CD4-positive, alpha-beta memory T cell (primary cell): ENCODE measurements at regions of chr5 and their contacts with region 1.

Region 1: GRCh38 chr5:154405078-154405792 is 40.6 kb upstream of the SAP30L start:
- DNase-seq: peak; percentile 56 to 61 (median 59)
- H3K4me3 ChIP-seq: peak overlapping the region in 1 of 2 donors; percentile 14
- H3K4me3 Mint-ChIP-seq: peak overlapping the region in 7 of 8 donors; percentile 27 to 80 (median 43)
- H3K27ac ChIP-seq: no peak overlapping the region
- H3K27ac Mint-ChIP-seq: peak overlapping the region in 3 of 7 donors; percentile 13 to 43 (median 30)
- H3K4me1 ChIP-seq: peaks cover 4% of the 10 kb centered on the region
- H3K4me1 Mint-ChIP-seq: peaks cover 2 to 16% (median 11%) of the 10 kb centered on the region in 4 donors
- H3K27me3 ChIP-seq: no peaks in the 10 kb centered on the region
- H3K27me3 Mint-ChIP-seq: no peaks in the 10 kb centered on the region

Region 2: DNA sequence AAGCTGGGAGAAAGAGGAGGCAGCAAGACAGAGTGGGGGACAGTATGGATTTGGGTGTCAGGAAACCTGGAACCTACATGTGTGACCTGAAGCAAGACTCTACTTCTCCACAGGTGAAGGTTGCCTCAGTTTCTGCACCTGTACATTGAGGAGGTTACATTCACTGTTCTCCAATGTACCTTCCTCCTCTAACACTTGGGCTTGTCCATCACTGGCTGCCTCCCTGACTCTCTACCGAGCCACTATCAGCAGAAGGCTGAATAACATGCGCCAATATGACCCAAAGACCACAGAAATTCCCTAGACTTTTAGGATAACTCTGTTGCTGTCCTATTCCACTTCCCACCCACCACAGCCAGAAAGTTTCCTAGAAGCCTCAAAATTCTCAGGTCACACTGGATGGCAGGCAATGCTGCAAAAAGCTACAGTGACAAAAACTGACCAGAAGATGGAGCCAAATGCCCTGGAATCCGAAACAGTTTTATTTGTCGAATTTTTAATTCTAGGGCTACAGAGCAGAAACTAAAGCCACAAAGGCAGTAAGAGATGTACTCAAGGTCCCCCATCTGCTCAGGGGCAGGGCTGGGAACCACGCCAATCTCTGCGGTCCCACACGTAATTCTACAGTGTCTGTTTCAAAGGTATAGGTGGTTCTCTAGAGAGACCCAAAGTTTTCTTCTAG is 431.0 kb before region 1 on chr5:
- CTCF ChIA-PET with region 1: interaction called, 21 read pairs
- POLR2A ChIA-PET with region 1: no interaction called
- intact Hi-C with region 1: no loop called
- DNase-seq: peak; percentile 28 to 41 (median 39)
- H3K4me3 ChIP-seq: no peak overlapping the region
- H3K4me3 Mint-ChIP-seq: no peak overlapping the region
- H3K27ac ChIP-seq: no peak overlapping the region
- H3K27ac Mint-ChIP-seq: no peak overlapping the region
- H3K4me1 ChIP-seq: no peaks in the 10 kb centered on the region
- H3K4me1 Mint-ChIP-seq: no peaks in the 10 kb centered on the region
- H3K27me3 ChIP-seq: no peaks in the 10 kb centered on the region
- H3K27me3 Mint-ChIP-seq: peaks cover 3 to 4% of the 10 kb centered on the region in 2 donors

Region 3: DNA sequence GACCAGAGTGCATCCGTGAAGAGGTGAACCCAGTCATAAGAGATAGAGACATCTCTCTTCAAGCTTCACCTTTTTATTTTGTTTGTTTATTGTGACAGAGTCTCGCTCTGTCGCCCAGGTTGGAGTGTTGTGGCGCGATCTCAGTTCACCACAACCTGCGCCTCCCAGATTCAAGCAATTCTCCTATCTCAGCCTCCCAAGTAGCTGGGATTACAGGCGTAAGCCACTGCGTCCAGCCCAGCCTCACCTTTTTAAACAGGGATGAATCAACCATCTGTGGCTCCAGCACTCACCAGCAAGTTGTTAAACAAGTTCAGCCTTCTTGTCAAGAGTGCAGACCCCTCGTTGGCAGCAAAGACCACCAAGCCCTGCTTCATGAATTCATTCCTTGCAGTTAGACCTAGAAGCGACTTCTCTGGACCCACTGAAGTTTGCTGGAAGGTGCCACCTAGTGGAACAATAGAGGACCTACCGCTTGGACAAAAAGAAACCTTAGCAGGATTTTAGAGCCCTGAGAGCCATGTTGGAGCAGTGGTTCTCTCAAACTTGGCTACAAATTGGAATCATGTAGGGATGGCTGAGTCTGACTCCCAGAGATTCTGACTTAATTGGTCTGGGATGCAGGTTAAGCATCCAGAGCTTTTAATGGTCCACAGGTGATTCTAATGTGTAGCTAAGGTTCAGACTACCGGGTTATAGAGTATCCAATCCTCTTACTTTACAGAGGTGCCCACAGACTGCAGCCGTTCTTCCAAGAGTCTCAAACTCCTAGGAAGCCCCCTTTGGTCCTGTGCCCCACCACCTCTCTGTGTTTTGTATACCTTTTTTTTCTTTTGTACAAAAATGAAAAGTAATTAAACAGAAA is 225.2 kb before region 1 on chr5:
- CTCF ChIA-PET with region 1: interaction called, 3 read pairs
- POLR2A ChIA-PET with region 1: no interaction called
- intact Hi-C with region 1: loop called (anchors 2 kb)
- DNase-seq: peak in 4 of 5 donors; percentile 37 to 52 (median 42)
- H3K4me3 ChIP-seq: no peak overlapping the region
- H3K4me3 Mint-ChIP-seq: no peak overlapping the region
- H3K27ac ChIP-seq: no peak overlapping the region
- H3K27ac Mint-ChIP-seq: no peak overlapping the region
- H3K4me1 ChIP-seq: no peaks in the 10 kb centered on the region
- H3K4me1 Mint-ChIP-seq: peaks cover 0 to 4% (median 2%) of the 10 kb centered on the region in 4 donors
- H3K27me3 ChIP-seq: no peaks in the 10 kb centered on the region
- H3K27me3 Mint-ChIP-seq: peaks cover 2 to 4% of the 10 kb centered on the region in 2 donors

Region 4: DNA sequence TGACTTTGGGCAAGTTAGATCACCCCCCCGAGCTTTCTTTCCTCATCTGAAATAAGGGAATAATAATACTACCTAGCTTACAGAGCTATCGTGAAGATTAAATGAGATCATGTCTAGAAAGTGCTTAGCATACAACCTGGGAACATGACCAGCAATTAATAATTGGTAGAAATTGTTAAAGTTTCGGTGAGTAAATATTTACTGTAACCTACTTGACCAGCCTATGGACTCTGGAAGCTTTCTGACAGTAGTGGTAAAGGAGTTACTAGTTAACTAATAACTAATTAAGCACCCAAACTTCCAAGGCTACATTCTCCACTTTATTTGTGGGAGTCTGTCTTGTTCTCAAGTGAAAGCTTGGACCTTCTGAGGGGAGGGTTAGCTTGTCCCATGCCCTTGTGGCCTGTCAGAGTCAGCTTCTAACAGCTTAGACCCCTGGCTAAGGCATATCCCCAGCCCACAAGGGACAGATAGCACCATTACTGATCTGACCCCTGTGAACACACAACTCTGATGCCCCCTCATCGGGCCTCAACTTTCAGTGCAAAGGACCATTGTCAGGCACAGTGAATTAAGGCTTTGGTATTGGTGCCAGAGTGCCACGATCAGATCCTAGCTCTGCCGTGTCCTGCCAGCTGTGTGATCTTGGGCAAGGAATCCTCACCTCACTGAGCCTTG is 18.1 kb before region 1 on chr5:
- CTCF ChIA-PET with region 1: interaction called, 18 read pairs
- POLR2A ChIA-PET with region 1: no interaction called
- intact Hi-C with region 1: no loop called
- DNase-seq: no peak
- H3K4me3 ChIP-seq: no peak overlapping the region
- H3K4me3 Mint-ChIP-seq: no peak overlapping the region
- H3K27ac ChIP-seq: no peak overlapping the region
- H3K27ac Mint-ChIP-seq: no peak overlapping the region
- H3K4me1 ChIP-seq: no peaks in the 10 kb centered on the region
- H3K4me1 Mint-ChIP-seq: peaks cover 0 to 17% (median 11%) of the 10 kb centered on the region in 4 donors
- H3K27me3 ChIP-seq: no peaks in the 10 kb centered on the region
- H3K27me3 Mint-ChIP-seq: no peaks in the 10 kb centered on the region

Region 5: DNA sequence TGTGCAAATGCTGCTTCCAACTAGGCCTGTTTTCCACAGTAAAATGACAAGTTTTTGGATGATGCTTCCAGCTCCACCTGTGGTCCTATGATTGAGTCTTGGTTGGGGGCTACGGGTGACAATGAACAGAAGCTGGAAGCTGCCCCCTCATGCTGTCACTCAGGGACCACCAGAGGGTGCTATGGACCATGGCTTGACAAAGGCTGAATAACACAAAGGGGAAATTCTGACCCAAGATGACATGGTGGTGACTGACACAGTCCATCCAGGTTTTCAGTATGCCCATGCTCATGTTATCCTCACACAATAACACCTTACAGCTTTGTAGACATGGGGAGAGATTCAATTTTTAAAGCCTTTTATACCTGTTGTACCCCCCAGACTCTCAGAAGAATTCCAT is 16.6 kb after region 1 on chr5:
- CTCF ChIA-PET with region 1: interaction called, 42 read pairs
- POLR2A ChIA-PET with region 1: no interaction called
- intact Hi-C with region 1: no loop called
- DNase-seq: no peak
- H3K4me3 ChIP-seq: no peak overlapping the region
- H3K4me3 Mint-ChIP-seq: no peak overlapping the region
- H3K27ac ChIP-seq: no peak overlapping the region
- H3K27ac Mint-ChIP-seq: peak overlapping the region in 3 of 7 donors; percentile 5 to 66 (median 43)
- H3K4me1 ChIP-seq: no peaks in the 10 kb centered on the region
- H3K4me1 Mint-ChIP-seq: peaks cover 7 to 9% (median 8%) of the 10 kb centered on the region in 4 donors
- H3K27me3 ChIP-seq: no peaks in the 10 kb centered on the region
- H3K27me3 Mint-ChIP-seq: no peaks in the 10 kb centered on the region